Calu3 (cell line): ENCODE measurements at regions of chr9 and their contacts with region 1.

Region 1: GRCh38 chr9:72695365-72695764 is 174.0 kb downstream of the TMC1 start:
- DNase-seq: no peak
- H3K4me3 Mint-ChIP-seq: no peak overlapping the region
- H3K27ac Mint-ChIP-seq: no peak overlapping the region
- H3K4me1 Mint-ChIP-seq: no peaks in the 10 kb centered on the region
- H3K27me3 Mint-ChIP-seq: no peaks in the 10 kb centered on the region
- CTCF ChIP-seq: no peak

Region 2: DNA sequence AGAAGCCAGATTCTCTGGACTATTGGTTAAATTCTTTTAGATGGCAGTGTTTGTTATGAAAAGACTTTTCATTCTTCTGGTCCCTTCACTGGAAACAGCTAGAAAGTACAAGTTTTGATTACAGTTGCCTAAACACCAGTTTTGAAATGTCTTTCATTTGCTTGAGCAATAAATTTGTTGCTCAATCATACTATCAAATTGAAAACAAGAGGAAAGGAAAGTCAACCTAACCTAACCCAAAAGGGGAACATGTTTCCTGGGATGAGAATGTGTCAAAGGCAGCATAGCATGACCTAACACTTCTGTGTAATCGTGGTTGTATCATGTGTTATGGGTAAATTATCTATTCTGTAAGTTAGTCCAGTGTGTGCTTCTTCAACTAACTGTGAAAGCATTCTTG is 39.3 kb after region 1 on chr9:
- CTCF ChIA-PET with region 1: no interaction called
- intact Hi-C with region 1: loop called (anchors 5 kb)
- DNase-seq: no peak
- H3K4me3 Mint-ChIP-seq: no peak overlapping the region
- H3K27ac Mint-ChIP-seq: no peak overlapping the region
- H3K4me1 Mint-ChIP-seq: no peaks in the 10 kb centered on the region
- H3K27me3 Mint-ChIP-seq: no peaks in the 10 kb centered on the region
- CTCF ChIP-seq: no peak